Activated naive CD4-positive, alpha-beta T cell treated with anti-CD3 and anti-CD28 coated beads, Interleukin-2, amount 10 ng/mL, durations not matched to agents 7 days and 5 days (primary cell): ENCODE measurements at regions of chr10 and their contacts with region 1.

Region 1: GRCh38 chr10:71766702-71767419 is 6.5 kb downstream of the VSIR start:
- DNase-seq: peak; percentile 41
- H3K4me3 Mint-ChIP-seq: no peak overlapping the region
- H3K27ac Mint-ChIP-seq: peak overlapping the region; percentile 94
- H3K4me1 Mint-ChIP-seq: peaks cover 88% of the 10 kb centered on the region
- H3K27me3 Mint-ChIP-seq: no peaks in the 10 kb centered on the region

Region 2: GRCh38 chr10:71748671-71749191 is 18.1 kb before region 1 on chr10:
- CTCF ChIA-PET with region 1: interaction called, 36 read pairs
- DNase-seq: peak; percentile 93
- H3K4me3 Mint-ChIP-seq: peak overlapping the region; percentile 49
- H3K27ac Mint-ChIP-seq: peak overlapping the region; percentile 96
- H3K4me1 Mint-ChIP-seq: peaks cover 98% of the 10 kb centered on the region
- H3K27me3 Mint-ChIP-seq: no peaks in the 10 kb centered on the region